Activated CD4-positive, alpha-beta memory T cell treated with anti-CD3 and anti-CD28 coated beads, Interleukin-2, amount 10 ng/mL, durations not matched to agents 7 days and 5 days (primary cell): ENCODE measurements at regions of chr1 and their contacts with region 1.

Region 1: GRCh38 chr1:25022361-25023189 is 92.5 kb upstream of the RUNX3 start:
- DNase-seq: peak; percentile 96
- H3K4me3 Mint-ChIP-seq: peak overlapping the region; percentile 73
- H3K27ac Mint-ChIP-seq: peak overlapping the region; percentile 97
- H3K4me1 Mint-ChIP-seq: peaks cover 96% of the 10 kb centered on the region
- H3K27me3 Mint-ChIP-seq: no peaks in the 10 kb centered on the region

Region 2: DNA sequence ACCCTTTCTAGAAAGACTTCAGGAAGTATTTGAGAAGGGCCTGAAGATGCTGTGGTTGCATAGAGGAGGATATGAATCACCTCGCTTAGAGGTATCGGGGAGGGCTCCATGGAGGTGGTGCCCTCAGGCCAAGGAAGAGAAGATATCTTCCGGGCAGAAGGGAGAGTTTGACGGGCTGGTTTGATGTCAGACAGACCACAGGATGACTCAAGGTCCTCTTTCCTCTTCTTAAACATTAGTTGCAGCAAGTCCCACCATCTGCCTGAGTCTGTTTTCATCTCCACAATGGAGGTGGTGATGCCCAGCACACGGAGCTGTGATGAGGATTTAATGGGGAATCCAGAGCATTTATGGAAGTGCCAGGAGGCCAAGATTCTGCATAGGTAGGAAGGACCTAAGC is 67.4 kb before region 1 on chr1:
- CTCF ChIA-PET with region 1: interaction called, 8 read pairs
- POLR2A ChIA-PET with region 1: interaction called, 13 read pairs
- DNase-seq: peak; percentile 88
- H3K4me3 Mint-ChIP-seq: peak overlapping the region; percentile 75
- H3K27ac Mint-ChIP-seq: peak overlapping the region; percentile 96
- H3K4me1 Mint-ChIP-seq: peaks cover 96% of the 10 kb centered on the region
- H3K27me3 Mint-ChIP-seq: no peaks in the 10 kb centered on the region

Region 3: GRCh38 chr1:24990779-24991641 is 31.6 kb before region 1 on chr1:
- CTCF ChIA-PET with region 1: interaction called, 4 read pairs
- POLR2A ChIA-PET with region 1: interaction called, 50 read pairs
- DNase-seq: no peak
- H3K4me3 Mint-ChIP-seq: no peak overlapping the region
- H3K27ac Mint-ChIP-seq: peak overlapping the region; percentile 97
- H3K4me1 Mint-ChIP-seq: peaks cover 88% of the 10 kb centered on the region
- H3K27me3 Mint-ChIP-seq: peaks cover 10% of the 10 kb centered on the region

Region 4: GRCh38 chr1:24996983-24997893 is 25.3 kb before region 1 on chr1:
- CTCF ChIA-PET with region 1: interaction called, 4 read pairs
- POLR2A ChIA-PET with region 1: interaction called, 50 read pairs
- DNase-seq: no peak
- H3K4me3 Mint-ChIP-seq: no peak overlapping the region
- H3K27ac Mint-ChIP-seq: peak overlapping the region; percentile 38
- H3K4me1 Mint-ChIP-seq: peaks cover 85% of the 10 kb centered on the region
- H3K27me3 Mint-ChIP-seq: no peaks in the 10 kb centered on the region

Region 5: GRCh38 chr1:25006770-25007169 is 15.8 kb before region 1 on chr1:
- CTCF ChIA-PET with region 1: interaction called, 5 read pairs
- POLR2A ChIA-PET with region 1: interaction called, 51 read pairs
- DNase-seq: no peak
- H3K4me3 Mint-ChIP-seq: no peak overlapping the region
- H3K27ac Mint-ChIP-seq: no peak overlapping the region
- H3K4me1 Mint-ChIP-seq: peaks cover 67% of the 10 kb centered on the region
- H3K27me3 Mint-ChIP-seq: peaks cover 6% of the 10 kb centered on the region